ENCODE measurements at regions of chr7 and their contacts with region 1.

Region 1: GRCh38 chr7:141522657-141523342 is 28.4 kb upstream of the AGK start:
- DNase-seq: no peak

Region 2: GRCh38 chr7:141280100-141280499 is 242.7 kb before region 1 on chr7:
- CTCF ChIA-PET with region 1: interaction called, 10 read pairs
- POLR2A ChIA-PET with region 1: no interaction called
- DNase-seq: no peak

Region 3: DNA sequence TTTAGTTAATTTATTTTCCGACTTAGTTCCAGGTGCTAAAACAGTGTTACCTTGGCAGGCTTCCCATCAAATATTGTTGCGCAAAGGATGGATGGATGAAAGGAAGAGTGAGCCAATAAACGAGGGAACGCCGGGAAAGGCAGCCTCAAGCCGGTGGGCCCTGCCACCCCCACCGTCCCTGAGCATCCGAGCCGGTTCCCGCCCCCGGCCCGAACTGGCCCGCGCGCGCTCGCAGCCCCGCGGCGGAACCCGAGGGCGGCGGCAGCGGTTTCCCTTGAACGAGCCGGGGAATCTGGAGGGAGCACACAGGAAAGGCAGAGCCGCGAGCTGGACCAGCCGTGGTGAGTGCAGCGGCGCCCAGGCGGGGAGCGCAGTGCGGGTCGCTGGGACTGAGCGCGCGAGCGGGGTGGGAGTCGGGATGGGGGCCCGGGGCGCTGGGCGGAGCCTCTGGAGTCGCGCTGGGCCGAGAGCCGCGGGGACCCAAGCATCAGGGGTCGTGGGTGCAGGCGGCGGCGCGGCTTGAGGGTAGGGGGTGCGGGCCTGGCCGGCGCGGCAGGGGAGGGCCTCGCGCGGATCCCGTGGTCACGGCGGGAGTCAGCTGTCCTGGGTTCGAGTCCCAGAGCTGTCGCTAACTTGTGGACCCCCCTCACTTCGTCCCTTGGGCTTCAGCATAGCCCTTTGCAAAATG is 28.4 kb after region 1 on chr7 and contains the start of gene AGK:
- CTCF ChIA-PET with region 1: no interaction called
- POLR2A ChIA-PET with region 1: no interaction called
- DNase-seq: peak; percentile 93